Activated CD8-positive, alpha-beta T cell treated with anti-CD3 and anti-CD28 coated beads, Interleukin-2, amount 10 ng/mL, durations not matched to agents 7 days and 5 days (primary cell): ENCODE measurements at regions of chr10 and their contacts with region 1.

Region 1: GRCh38 chr10:119686439-119687191 is 35.4 kb downstream of the BAG3 start:
- DNase-seq: peak; percentile 80
- ATAC-seq: peak; percentile 93
- H3K4me3 Mint-ChIP-seq: peak overlapping the region; percentile 60
- H3K27ac Mint-ChIP-seq: peak overlapping the region; percentile 53
- H3K4me1 Mint-ChIP-seq: peaks cover 26% of the 10 kb centered on the region
- H3K27me3 Mint-ChIP-seq: peaks cover 4% of the 10 kb centered on the region

Region 2: DNA sequence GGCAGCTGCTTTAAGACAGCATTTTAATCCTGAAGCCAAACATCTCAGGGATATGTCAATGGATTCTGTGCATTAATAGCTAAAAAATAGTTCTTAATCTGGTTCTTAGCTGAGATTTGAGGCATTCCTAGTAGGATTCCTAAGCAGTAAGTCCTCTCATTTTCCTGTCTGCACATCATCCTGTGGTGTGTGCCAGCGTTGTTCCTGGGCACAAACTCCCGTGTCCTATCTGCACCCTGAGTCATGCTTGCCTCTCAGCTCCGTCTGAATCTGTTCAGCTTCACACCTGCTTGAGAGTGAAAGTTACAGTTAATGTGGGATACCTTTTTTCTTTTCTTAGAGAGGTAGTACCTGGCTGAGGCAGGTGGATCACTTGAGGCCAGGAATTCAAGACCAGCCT is 15.9 kb before region 1 on chr10:
- CTCF ChIA-PET with region 1: interaction called, 21 read pairs
- POLR2A ChIA-PET with region 1: no interaction called
- DNase-seq: no peak
- ATAC-seq: no peak
- H3K4me3 Mint-ChIP-seq: no peak overlapping the region
- H3K27ac Mint-ChIP-seq: no peak overlapping the region
- H3K4me1 Mint-ChIP-seq: peaks cover 6% of the 10 kb centered on the region
- H3K27me3 Mint-ChIP-seq: no peaks in the 10 kb centered on the region

Region 3: GRCh38 chr10:119715628-119716505 is 29.3 kb after region 1 on chr10:
- CTCF ChIA-PET with region 1: interaction called, 10 read pairs
- POLR2A ChIA-PET with region 1: no interaction called
- DNase-seq: no peak
- ATAC-seq: no peak
- H3K4me3 Mint-ChIP-seq: no peak overlapping the region
- H3K27ac Mint-ChIP-seq: no peak overlapping the region
- H3K4me1 Mint-ChIP-seq: no peaks in the 10 kb centered on the region
- H3K27me3 Mint-ChIP-seq: peaks cover 3% of the 10 kb centered on the region

Region 4: GRCh38 chr10:119737827-119738226 is 51.2 kb after region 1 on chr10:
- CTCF ChIA-PET with region 1: interaction called, 28 read pairs
- POLR2A ChIA-PET with region 1: no interaction called
- DNase-seq: no peak
- ATAC-seq: peak; percentile 51
- H3K4me3 Mint-ChIP-seq: no peak overlapping the region
- H3K27ac Mint-ChIP-seq: peak overlapping the region; percentile 39
- H3K4me1 Mint-ChIP-seq: peaks cover 29% of the 10 kb centered on the region
- H3K27me3 Mint-ChIP-seq: no peaks in the 10 kb centered on the region

Region 5: GRCh38 chr10:119784340-119785070 is 97.9 kb after region 1 on chr10:
- CTCF ChIA-PET with region 1: interaction called, 13 read pairs
- POLR2A ChIA-PET with region 1: no interaction called
- DNase-seq: peak; percentile 41
- ATAC-seq: peak; percentile 87
- H3K4me3 Mint-ChIP-seq: peak overlapping the region; percentile 41
- H3K27ac Mint-ChIP-seq: peak overlapping the region; percentile 73
- H3K4me1 Mint-ChIP-seq: peaks cover 44% of the 10 kb centered on the region
- H3K27me3 Mint-ChIP-seq: no peaks in the 10 kb centered on the region